ENCODE measurements at regions of chr3 and their contacts with region 1.

Region 1: DNA sequence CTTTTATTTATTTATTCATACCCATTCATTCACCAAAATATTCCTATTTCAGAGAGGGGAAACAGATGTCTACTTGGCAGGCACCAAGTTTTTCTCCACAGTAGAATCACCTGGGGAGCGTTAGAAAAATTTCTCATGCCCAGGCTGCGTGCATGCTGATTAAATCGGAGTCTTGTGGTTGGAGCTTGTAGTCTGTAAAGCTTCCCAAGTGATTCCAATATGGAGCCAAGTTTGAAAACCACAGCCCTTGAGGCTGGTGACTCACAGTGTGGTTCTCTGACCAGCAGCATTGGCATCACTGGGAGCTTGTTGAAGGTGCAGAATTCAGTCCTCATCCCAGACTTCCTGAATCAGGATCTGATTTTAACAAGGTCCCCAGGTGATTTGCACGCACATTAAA is 49.7 kb downstream of the PDHB start:
- DNase-seq: peak; percentile 25 to 75 (median 67)
- H3K4me3 ChIP-seq: no peak overlapping the region
- H3K27ac ChIP-seq: peak overlapping the region in 3 of 5 donors; percentile 2 to 39 (median 15)
- H3K4me1 ChIP-seq: peaks cover 8 to 33% of the 10 kb centered on the region in 2 donors
- H3K27me3 ChIP-seq: no peaks in the 10 kb centered on the region
- CTCF ChIP-seq: no peak
- POLR2A ChIP-seq: no peak

Region 2: GRCh38 chr3:58222094-58222724 is 161.7 kb before region 1 on chr3:
- intact Hi-C with region 1: no loop called
- DNase-seq: no peak
- H3K4me3 ChIP-seq: no peak overlapping the region
- H3K27ac ChIP-seq: no peak overlapping the region
- H3K4me1 ChIP-seq: peaks cover 0 to 3% of the 10 kb centered on the region in 2 donors
- H3K27me3 ChIP-seq: no peaks in the 10 kb centered on the region
- CTCF ChIP-seq: no peak
- POLR2A ChIP-seq: no peak

Region 3: DNA sequence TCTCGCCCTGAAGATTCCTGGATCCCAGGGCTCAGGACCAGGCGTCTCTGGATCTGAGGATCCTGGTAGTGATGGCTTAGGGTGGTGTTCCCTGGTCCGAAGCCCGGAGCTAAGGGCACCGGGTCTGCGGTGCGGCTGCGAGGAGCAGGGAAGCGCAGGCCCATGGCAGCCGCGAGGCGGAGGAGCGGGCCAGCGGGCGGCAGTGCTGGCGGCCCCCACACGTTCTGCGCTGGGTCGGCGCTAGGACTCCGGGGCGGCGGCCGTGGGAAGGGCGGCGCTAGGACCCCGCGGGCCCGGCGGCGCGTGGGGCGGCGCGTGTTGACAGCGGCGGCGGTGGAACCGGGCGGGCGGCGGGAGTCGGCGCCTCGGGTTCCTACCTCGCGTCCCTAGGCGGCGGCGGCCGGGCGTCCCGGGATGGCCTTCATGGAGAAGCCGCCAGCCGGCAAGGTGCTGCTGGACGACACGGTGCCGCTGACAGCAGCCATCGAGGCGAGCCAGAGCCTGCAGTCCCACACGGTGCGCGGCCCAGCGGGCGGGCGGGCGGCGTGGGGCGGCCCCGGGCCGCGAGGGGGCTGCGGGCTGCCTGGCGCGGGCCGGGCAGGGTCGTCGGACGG is 51.2 kb before region 1 on chr3 and contains the start of gene PXK:
- intact Hi-C with region 1: loop called in 1 of 2 experiments (anchors 10 kb)
- DNase-seq: peak; percentile 68 to 83 (median 73)
- H3K4me3 ChIP-seq: peak within 1 kb of the TSS in 3 of 4 donors; percentile 37 to 89 (median 54)
- H3K27ac ChIP-seq: peak within 1 kb of the TSS in 3 of 5 donors; percentile 44 to 70 (median 62)
- H3K4me1 ChIP-seq: peaks cover 10 to 32% of the 10 kb centered on the region in 2 donors
- H3K27me3 ChIP-seq: no peaks in the 10 kb centered on the region
- CTCF ChIP-seq: peak in 4 of 6 experiments; percentile 9 to 36 (median 22)
- POLR2A ChIP-seq: peak; percentile 20 to 55
- total RNA-seq, gene PXK: 18.7 to 35.8 (median 25.4) TPM

Measured in adrenal gland (tissue), 19 donors.